CD4-positive, alpha-beta memory T cell (primary cell): ENCODE measurements at regions of chr2 and their contacts with region 1.

Region 1: DNA sequence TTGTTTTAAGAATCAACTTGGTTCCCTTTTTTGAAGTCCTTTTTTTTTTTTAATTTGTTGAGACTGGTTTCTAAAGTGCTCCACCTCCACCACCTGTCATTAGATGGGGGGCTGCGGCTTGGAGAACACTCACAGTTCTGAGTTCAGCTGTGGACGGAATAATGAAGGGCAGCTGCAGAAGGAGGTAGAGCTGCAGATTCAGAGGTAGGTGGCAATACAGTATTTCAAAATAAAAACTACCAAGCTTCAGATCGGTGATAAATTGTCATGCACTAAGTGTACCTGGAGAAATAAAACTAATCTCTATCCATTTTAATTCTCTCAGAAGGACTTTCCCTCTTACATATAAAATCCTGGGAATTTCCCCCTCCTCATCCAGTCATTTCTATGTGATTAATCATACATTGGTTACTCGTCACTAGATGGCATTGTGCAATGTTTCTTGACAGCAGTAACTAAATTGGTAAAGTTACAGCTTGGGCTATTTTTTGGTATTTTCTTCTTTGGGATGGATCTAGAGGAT is 81.1 kb upstream of the SLC39A10 start:
- DNase-seq: no peak
- H3K4me3 ChIP-seq: no peak overlapping the region
- H3K4me3 Mint-ChIP-seq: peak overlapping the region in 7 of 8 donors; percentile 25 to 70 (median 57)
- H3K27ac ChIP-seq: no peak overlapping the region
- H3K27ac Mint-ChIP-seq: peak overlapping the region in 6 of 7 donors; percentile 36 to 93 (median 90)
- H3K4me1 ChIP-seq: peaks cover 47% of the 10 kb centered on the region
- H3K4me1 Mint-ChIP-seq: peaks cover 35 to 64% (median 52%) of the 10 kb centered on the region in 4 donors
- H3K27me3 ChIP-seq: no peaks in the 10 kb centered on the region
- H3K27me3 Mint-ChIP-seq: no peaks in the 10 kb centered on the region

Region 2: GRCh38 chr2:195252018-195252417 is 323.9 kb before region 1 on chr2:
- CTCF ChIA-PET with region 1: no interaction called
- POLR2A ChIA-PET with region 1: no interaction called
- intact Hi-C with region 1: no loop called
- DNase-seq: no peak
- H3K4me3 ChIP-seq: no peak overlapping the region
- H3K4me3 Mint-ChIP-seq: no peak overlapping the region
- H3K27ac ChIP-seq: no peak overlapping the region
- H3K27ac Mint-ChIP-seq: no peak overlapping the region
- H3K4me1 ChIP-seq: no peaks in the 10 kb centered on the region
- H3K4me1 Mint-ChIP-seq: no peaks in the 10 kb centered on the region
- H3K27me3 ChIP-seq: no peaks in the 10 kb centered on the region
- H3K27me3 Mint-ChIP-seq: peaks cover 0 to 1% of the 10 kb centered on the region in 2 donors

Region 3: DNA sequence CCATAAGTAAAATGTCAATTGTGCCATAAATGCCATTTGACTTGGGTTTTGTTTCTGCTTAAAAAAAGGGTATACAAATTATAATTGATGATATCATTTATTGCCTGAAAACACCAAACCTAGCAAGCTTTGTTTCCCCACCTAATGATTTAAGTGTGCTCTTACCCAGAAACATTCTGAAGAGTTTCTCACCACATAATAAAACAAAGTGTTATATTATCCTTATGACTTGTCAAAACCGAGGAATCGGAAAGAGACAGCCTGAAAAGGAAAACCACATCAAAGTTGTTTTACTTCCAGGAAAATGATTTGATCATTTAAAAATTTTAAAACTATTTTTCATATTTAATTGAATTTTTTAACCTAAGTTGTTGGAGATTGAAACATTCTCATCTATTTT is 89.4 kb before region 1 on chr2:
- CTCF ChIA-PET with region 1: no interaction called
- POLR2A ChIA-PET with region 1: no interaction called
- intact Hi-C with region 1: no loop called
- DNase-seq: no peak
- H3K4me3 ChIP-seq: no peak overlapping the region
- H3K4me3 Mint-ChIP-seq: peak overlapping the region in 1 of 8 donors; percentile 41
- H3K27ac ChIP-seq: no peak overlapping the region
- H3K27ac Mint-ChIP-seq: no peak overlapping the region
- H3K4me1 ChIP-seq: peaks cover 24% of the 10 kb centered on the region
- H3K4me1 Mint-ChIP-seq: peaks cover 7 to 19% (median 16%) of the 10 kb centered on the region in 4 donors
- H3K27me3 ChIP-seq: no peaks in the 10 kb centered on the region
- H3K27me3 Mint-ChIP-seq: no peaks in the 10 kb centered on the region

Region 4: GRCh38 chr2:195533771-195534642 is 41.9 kb before region 1 on chr2:
- CTCF ChIA-PET with region 1: interaction called, 64 read pairs
- POLR2A ChIA-PET with region 1: interaction called, 13 read pairs
- intact Hi-C with region 1: loop called (anchors 5 kb)
- DNase-seq: peak in 4 of 5 donors; percentile 42 to 77 (median 49)
- H3K4me3 ChIP-seq: peak overlapping the region; percentile 59 to 70
- H3K4me3 Mint-ChIP-seq: peak overlapping the region; percentile 81 to 92 (median 86)
- H3K27ac ChIP-seq: peak overlapping the region; percentile 55
- H3K27ac Mint-ChIP-seq: peak overlapping the region; percentile 93 to 98 (median 96)
- H3K4me1 ChIP-seq: peaks cover 83% of the 10 kb centered on the region
- H3K4me1 Mint-ChIP-seq: peaks cover 69 to 91% (median 78%) of the 10 kb centered on the region in 4 donors
- H3K27me3 ChIP-seq: no peaks in the 10 kb centered on the region
- H3K27me3 Mint-ChIP-seq: no peaks in the 10 kb centered on the region

Region 5: GRCh38 chr2:195559431-195559914 is 16.5 kb before region 1 on chr2:
- CTCF ChIA-PET with region 1: interaction called, 36 read pairs
- POLR2A ChIA-PET with region 1: interaction called, 35 read pairs
- intact Hi-C with region 1: loop called (anchors 1 kb)
- DNase-seq: peak; percentile 87 to 90 (median 89)
- H3K4me3 ChIP-seq: no peak overlapping the region
- H3K4me3 Mint-ChIP-seq: peak overlapping the region; percentile 49 to 85 (median 70)
- H3K27ac ChIP-seq: peak overlapping the region; percentile 31
- H3K27ac Mint-ChIP-seq: peak overlapping the region; percentile 82 to 97 (median 92)
- H3K4me1 ChIP-seq: peaks cover 86% of the 10 kb centered on the region
- H3K4me1 Mint-ChIP-seq: peaks cover 49 to 74% (median 58%) of the 10 kb centered on the region in 4 donors
- H3K27me3 ChIP-seq: no peaks in the 10 kb centered on the region
- H3K27me3 Mint-ChIP-seq: no peaks in the 10 kb centered on the region

Region 6: DNA sequence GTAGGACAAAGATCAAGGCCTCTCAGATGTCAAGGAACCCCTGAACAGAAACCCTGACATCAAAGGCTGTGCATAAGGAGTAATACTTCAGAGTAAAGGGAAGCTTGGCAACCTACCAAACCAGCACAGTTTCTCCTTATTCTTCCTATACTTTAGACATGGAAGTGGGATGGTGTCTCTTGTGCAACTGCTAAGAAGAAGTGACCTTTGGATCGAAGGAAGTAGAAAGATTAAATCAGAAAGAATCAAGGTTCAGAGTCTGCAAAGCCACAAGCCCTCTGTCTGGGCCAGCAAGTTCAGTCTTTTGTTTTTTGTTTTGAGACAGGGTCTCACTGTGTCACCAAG is 14.9 kb after region 1 on chr2:
- CTCF ChIA-PET with region 1: interaction called, 14 read pairs
- POLR2A ChIA-PET with region 1: no interaction called
- intact Hi-C with region 1: no loop called
- DNase-seq: no peak
- H3K4me3 ChIP-seq: no peak overlapping the region
- H3K4me3 Mint-ChIP-seq: no peak overlapping the region
- H3K27ac ChIP-seq: no peak overlapping the region
- H3K27ac Mint-ChIP-seq: peak overlapping the region in 1 of 7 donors; percentile 54
- H3K4me1 ChIP-seq: peaks cover 8% of the 10 kb centered on the region
- H3K4me1 Mint-ChIP-seq: peaks cover 13 to 18% (median 17%) of the 10 kb centered on the region in 4 donors
- H3K27me3 ChIP-seq: no peaks in the 10 kb centered on the region
- H3K27me3 Mint-ChIP-seq: no peaks in the 10 kb centered on the region

Region 7: DNA sequence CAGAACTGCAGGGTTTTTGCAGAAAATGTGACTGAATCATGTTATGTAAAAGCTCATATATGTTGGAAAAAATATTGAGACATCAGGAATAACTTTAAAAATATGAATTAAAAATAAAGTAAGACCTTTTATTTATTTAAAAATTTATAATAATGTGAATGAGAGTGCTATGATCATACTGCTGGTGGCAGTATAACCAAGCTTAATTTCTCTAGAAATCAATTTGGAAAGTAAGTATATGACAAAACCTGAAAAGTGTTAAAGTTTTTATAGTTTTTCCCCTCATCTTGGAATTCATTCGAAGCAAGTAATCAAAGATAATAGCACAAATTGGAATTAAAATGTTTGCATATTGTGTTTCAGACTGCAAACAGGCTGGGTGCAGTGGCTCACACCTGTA is 88.6 kb after region 1 on chr2:
- CTCF ChIA-PET with region 1: interaction called, 96 read pairs
- POLR2A ChIA-PET with region 1: interaction called, 135 read pairs
- intact Hi-C with region 1: loop called (anchors 1 kb)
- DNase-seq: no peak
- H3K4me3 ChIP-seq: no peak overlapping the region
- H3K4me3 Mint-ChIP-seq: peak overlapping the region in 2 of 8 donors; percentile 22 to 23
- H3K27ac ChIP-seq: no peak overlapping the region
- H3K27ac Mint-ChIP-seq: peak overlapping the region in 5 of 7 donors; percentile 18 to 82 (median 53)
- H3K4me1 ChIP-seq: peaks cover 74% of the 10 kb centered on the region
- H3K4me1 Mint-ChIP-seq: peaks cover 35 to 65% (median 43%) of the 10 kb centered on the region in 4 donors
- H3K27me3 ChIP-seq: no peaks in the 10 kb centered on the region
- H3K27me3 Mint-ChIP-seq: no peaks in the 10 kb centered on the region